GM12878 (cell line): ENCODE measurements at regions of chr1 and their contacts with region 1.

Region 1: GRCh38 chr1:60978421-60979357 is 103.7 kb upstream of the NFIA start:
- DNase-seq: peak; percentile 15
- ATAC-seq: peak; percentile 93
- H3K4me3 ChIP-seq: no peak overlapping the region
- H3K27ac ChIP-seq: no peak overlapping the region
- H3K4me1 ChIP-seq: no peaks in the 10 kb centered on the region
- H3K27me3 ChIP-seq: no peaks in the 10 kb centered on the region
- CTCF ChIP-seq: peak; percentile 58 to 60 (median 60)
- EP300 ChIP-seq: no peak
- POLR2A ChIP-seq: no peak
- RAD21 ChIP-seq: peak; percentile 62

Region 2: GRCh38 chr1:60813071-60813470 is 165.6 kb before region 1 on chr1:
- CTCF ChIA-PET with region 1: no interaction called
- POLR2A ChIA-PET with region 1: no interaction called
- RAD21 ChIA-PET with region 1: no interaction called
- SMC1A ChIA-PET with region 1: no interaction called
- in situ Hi-C with region 1: no loop called
- intact Hi-C with region 1: no loop called
- DNase-seq: no peak
- ATAC-seq: no peak
- H3K4me3 ChIP-seq: no peak overlapping the region
- H3K27ac ChIP-seq: no peak overlapping the region
- H3K4me1 ChIP-seq: no peaks in the 10 kb centered on the region
- H3K27me3 ChIP-seq: no peaks in the 10 kb centered on the region
- CTCF ChIP-seq: no peak
- EP300 ChIP-seq: no peak
- POLR2A ChIP-seq: no peak
- RAD21 ChIP-seq: no peak

Region 3: GRCh38 chr1:60965280-60965854 is 13.3 kb before region 1 on chr1:
- CTCF ChIA-PET with region 1: no interaction called
- POLR2A ChIA-PET with region 1: no interaction called
- RAD21 ChIA-PET with region 1: no interaction called
- SMC1A ChIA-PET with region 1: no interaction called
- in situ Hi-C with region 1: no loop called
- intact Hi-C with region 1: no loop called
- DNase-seq: no peak
- ATAC-seq: no peak
- H3K4me3 ChIP-seq: no peak overlapping the region
- H3K27ac ChIP-seq: no peak overlapping the region
- H3K4me1 ChIP-seq: no peaks in the 10 kb centered on the region
- H3K27me3 ChIP-seq: no peaks in the 10 kb centered on the region
- CTCF ChIP-seq: no peak
- EP300 ChIP-seq: no peak
- POLR2A ChIP-seq: no peak
- RAD21 ChIP-seq: no peak

Region 4: GRCh38 chr1:61170328-61171238 is 191.9 kb after region 1 on chr1:
- CTCF ChIA-PET with region 1: no interaction called
- POLR2A ChIA-PET with region 1: no interaction called
- RAD21 ChIA-PET with region 1: no interaction called
- SMC1A ChIA-PET with region 1: no interaction called
- in situ Hi-C with region 1: no loop called
- intact Hi-C with region 1: no loop called
- DNase-seq: no peak
- ATAC-seq: no peak
- H3K4me3 ChIP-seq: no peak overlapping the region
- H3K27ac ChIP-seq: no peak overlapping the region
- H3K4me1 ChIP-seq: no peaks in the 10 kb centered on the region; the same call in 1 of the 2 replicates
- H3K27me3 ChIP-seq: no peaks in the 10 kb centered on the region
- CTCF ChIP-seq: no peak
- EP300 ChIP-seq: no peak
- POLR2A ChIP-seq: no peak
- RAD21 ChIP-seq: no peak

Region 5: DNA sequence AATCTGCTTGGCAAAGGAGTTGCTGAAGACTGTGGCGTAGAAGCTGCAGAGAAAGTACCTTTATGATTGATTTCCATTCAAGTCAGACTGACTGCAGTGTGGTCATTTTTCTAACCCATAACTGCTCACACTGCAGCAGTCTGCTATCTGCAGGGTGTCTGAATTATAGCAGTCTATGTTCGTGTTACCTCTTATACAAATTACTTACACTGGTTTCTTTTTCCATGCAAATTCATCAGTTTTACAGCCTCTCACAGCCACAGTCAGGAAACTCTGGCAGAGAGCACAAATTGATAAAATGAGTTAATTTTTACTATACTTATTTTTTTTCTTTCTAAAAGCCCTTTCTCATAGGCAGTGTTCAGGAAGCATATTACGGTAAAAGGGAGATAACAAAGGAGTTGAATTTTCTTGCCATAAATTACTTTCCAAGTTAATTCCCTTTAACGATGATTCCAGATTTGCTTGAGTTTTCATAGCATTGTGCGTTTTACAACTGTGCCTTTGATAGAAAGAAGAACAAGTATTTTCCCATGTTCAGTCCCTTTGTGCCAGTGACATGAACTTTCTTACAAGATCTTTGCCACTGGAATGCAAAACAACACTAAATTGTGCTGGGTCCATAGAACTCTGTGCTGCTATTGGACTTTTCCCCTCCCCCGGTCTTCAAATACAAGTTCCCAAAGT is 365.2 kb after region 1 on chr1:
- CTCF ChIA-PET with region 1: no interaction called
- POLR2A ChIA-PET with region 1: no interaction called
- RAD21 ChIA-PET with region 1: no interaction called
- SMC1A ChIA-PET with region 1: no interaction called
- in situ Hi-C with region 1: no loop called
- intact Hi-C with region 1: loop called (anchors 10 kb)
- DNase-seq: no peak
- ATAC-seq: no peak
- H3K4me3 ChIP-seq: no peak overlapping the region
- H3K27ac ChIP-seq: no peak overlapping the region
- H3K4me1 ChIP-seq: no peaks in the 10 kb centered on the region
- H3K27me3 ChIP-seq: peaks cover 0 to 2% of the 10 kb centered on the region in 2 experiments; a peak in 3 of 4 replicates
- CTCF ChIP-seq: no peak
- EP300 ChIP-seq: no peak
- POLR2A ChIP-seq: no peak
- RAD21 ChIP-seq: no peak

Region 6: GRCh38 chr1:61641578-61642336 is 663.1 kb after region 1 on chr1:
- CTCF ChIA-PET with region 1: no interaction called
- POLR2A ChIA-PET with region 1: no interaction called
- RAD21 ChIA-PET with region 1: no interaction called
- SMC1A ChIA-PET with region 1: no interaction called
- in situ Hi-C with region 1: no loop called
- intact Hi-C with region 1: loop called (anchors 10 kb)
- DNase-seq: no peak
- ATAC-seq: peak; percentile 100
- H3K4me3 ChIP-seq: no peak overlapping the region
- H3K27ac ChIP-seq: no peak overlapping the region
- H3K4me1 ChIP-seq: 0 out of 2 replicates have a peak, but pooled peaks cover 4% of the 10 kb centered on the region
- H3K27me3 ChIP-seq: no peaks in the 10 kb centered on the region; a peak in 1 of 4 replicates
- CTCF ChIP-seq: peak; percentile 68 to 92 (median 72)
- EP300 ChIP-seq: no peak
- POLR2A ChIP-seq: no peak
- RAD21 ChIP-seq: peak; percentile 60